SK-N-SH (cell line): ENCODE measurements at regions of chr5 and their contacts with region 1.

Region 1: DNA sequence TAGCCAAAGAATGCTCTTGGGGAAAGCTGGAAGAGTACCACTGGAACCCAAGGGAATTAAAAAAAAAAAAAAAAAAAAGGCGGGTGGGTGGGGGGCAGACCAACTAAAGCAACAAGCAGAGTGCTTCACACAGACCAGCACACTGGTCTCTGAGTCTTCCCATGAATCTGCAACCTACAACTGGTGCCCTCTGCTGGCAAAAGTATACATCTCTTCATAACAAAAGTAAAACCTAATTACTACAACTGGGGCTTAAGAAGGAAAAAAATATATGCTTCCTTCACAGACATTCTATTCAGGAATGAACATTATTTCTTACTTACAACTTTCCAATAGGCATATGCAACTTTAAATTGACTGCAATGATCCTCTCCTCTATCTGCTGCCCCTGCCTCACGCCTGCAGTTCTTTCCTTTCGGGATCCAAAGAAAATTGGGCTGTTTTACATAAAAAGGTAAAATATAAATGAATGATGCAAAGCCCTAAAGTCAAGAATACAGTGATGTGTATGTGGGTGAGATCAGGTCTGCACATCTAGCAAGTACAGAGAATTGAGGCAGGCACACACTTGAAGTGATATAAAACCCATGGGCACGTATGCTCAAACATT is 7.2 kb upstream of the KLHL3 start:
- DNase-seq: peak; percentile 50
- H3K4me3 ChIP-seq: no peak overlapping the region
- H3K27ac ChIP-seq: no peak overlapping the region
- H3K4me1 ChIP-seq: no peaks in the 10 kb centered on the region
- H3K27me3 ChIP-seq: no peaks in the 10 kb centered on the region
- CTCF ChIP-seq: peak; percentile 74
- EP300 ChIP-seq: no peak
- RAD21 ChIP-seq: peak; percentile 80

Region 2: DNA sequence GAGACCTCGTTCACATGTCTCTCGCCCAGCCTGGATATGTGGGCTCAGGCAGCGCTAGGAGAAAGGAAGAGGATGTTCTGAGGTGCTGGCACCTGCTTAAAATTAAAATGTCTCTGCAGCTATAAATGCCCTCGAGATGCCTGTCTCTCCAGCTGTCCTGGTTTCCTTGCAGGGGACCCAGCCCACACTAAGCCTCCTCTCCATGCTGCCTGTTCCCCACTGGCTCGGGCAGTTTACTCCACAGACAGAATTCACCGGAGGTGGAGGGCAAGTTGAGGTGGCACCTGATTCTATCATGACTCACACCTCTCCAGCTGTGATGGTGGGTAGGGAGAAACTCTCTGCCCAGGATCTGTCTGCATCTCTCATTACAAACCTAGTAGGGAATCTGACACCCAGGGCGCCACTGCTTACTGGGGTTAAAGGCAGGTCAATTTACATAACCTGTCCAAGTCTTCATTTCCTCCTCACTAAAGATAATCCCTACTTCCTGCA is 664.9 kb before region 1 on chr5:
- CTCF ChIA-PET with region 1: no interaction called
- POLR2A ChIA-PET with region 1: no interaction called
- DNase-seq: no peak
- H3K4me3 ChIP-seq: no peak overlapping the region
- H3K27ac ChIP-seq: no peak overlapping the region
- H3K4me1 ChIP-seq: peaks cover 4% of the 10 kb centered on the region in 2 experiments; a peak in 2 of 4 replicates
- H3K27me3 ChIP-seq: no peaks in the 10 kb centered on the region
- CTCF ChIP-seq: no peak
- EP300 ChIP-seq: no peak
- RAD21 ChIP-seq: no peak

Region 3: DNA sequence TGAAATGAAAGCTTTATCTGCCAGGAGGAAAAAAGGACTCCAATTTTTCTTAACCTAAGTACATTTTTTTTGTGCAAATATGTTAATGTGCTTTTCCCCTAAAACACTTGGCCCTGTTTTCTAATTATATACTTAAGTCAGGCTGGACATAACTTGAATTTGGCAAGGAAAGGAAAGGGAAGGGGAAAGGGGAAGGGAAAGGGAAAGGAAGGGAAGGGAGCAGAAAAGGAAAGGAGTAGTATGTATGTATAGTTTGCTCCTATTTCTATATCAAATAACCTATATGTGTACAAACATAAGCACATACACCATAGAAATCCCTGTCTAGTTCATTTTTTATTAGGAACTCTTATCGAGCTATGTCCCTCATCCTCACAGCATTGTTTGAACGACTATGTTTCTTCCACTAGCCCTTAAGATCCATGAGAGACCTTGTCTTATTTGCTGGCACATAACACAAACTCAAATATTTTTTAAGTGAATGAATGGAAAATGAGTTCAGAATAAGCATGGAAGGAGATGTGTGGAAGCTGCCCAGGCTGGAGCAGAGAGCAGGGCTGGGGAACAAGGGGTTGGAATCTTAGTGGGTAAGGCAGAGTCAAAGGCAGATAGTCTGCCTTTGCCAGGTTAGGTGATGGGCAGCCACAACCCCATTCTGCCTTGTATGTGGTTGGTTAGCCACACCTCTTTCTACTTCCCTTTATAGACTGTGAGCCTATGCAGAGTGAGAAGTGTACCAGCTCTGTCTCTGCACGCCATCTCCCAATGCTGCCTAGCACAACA is 77.3 kb before region 1 on chr5:
- CTCF ChIA-PET with region 1: interaction called, 239 read pairs
- POLR2A ChIA-PET with region 1: no interaction called
- DNase-seq: no peak
- H3K4me3 ChIP-seq: no peak overlapping the region
- H3K27ac ChIP-seq: no peak overlapping the region
- H3K4me1 ChIP-seq: no peaks in the 10 kb centered on the region; a peak in 1 of 4 replicates
- H3K27me3 ChIP-seq: no peaks in the 10 kb centered on the region
- CTCF ChIP-seq: no peak
- EP300 ChIP-seq: no peak
- RAD21 ChIP-seq: no peak

Region 4: GRCh38 chr5:137730336-137730735 is 12.8 kb before region 1 on chr5:
- CTCF ChIA-PET with region 1: interaction called, 19 read pairs
- POLR2A ChIA-PET with region 1: no interaction called
- DNase-seq: no peak
- H3K4me3 ChIP-seq: no peak overlapping the region
- H3K27ac ChIP-seq: no peak overlapping the region
- H3K4me1 ChIP-seq: peaks cover 0 to 7% of the 10 kb centered on the region in 2 experiments; a peak in 1 of 4 replicates
- H3K27me3 ChIP-seq: no peaks in the 10 kb centered on the region
- CTCF ChIP-seq: no peak
- EP300 ChIP-seq: no peak
- RAD21 ChIP-seq: no peak

Region 5: GRCh38 chr5:137754126-137754960 is 11.2 kb after region 1 on chr5 and contains the start of gene HNRNPA0:
- CTCF ChIA-PET with region 1: interaction called, 16 read pairs
- POLR2A ChIA-PET with region 1: interaction called, 7 read pairs
- DNase-seq: peak; percentile 97
- H3K4me3 ChIP-seq: peak within 1 kb of the TSS; percentile 93 to 94
- H3K27ac ChIP-seq: peak within 1 kb of the TSS; percentile 97
- H3K4me1 ChIP-seq: peaks cover 0 to 6% of the 10 kb centered on the region in 2 experiments; a peak in 2 of 4 replicates
- H3K27me3 ChIP-seq: no peaks in the 10 kb centered on the region
- CTCF ChIP-seq: no peak
- EP300 ChIP-seq: peak; percentile 97 to 99
- RAD21 ChIP-seq: no peak
- polyA plus RNA-seq, gene HNRNPA0: 19.2 and 24.9 TPM in 2 replicates

Region 6: GRCh38 chr5:137822158-137822764 is 79.1 kb after region 1 on chr5:
- CTCF ChIA-PET with region 1: no interaction called
- POLR2A ChIA-PET with region 1: no interaction called
- DNase-seq: peak; percentile 60
- H3K4me3 ChIP-seq: no peak overlapping the region
- H3K27ac ChIP-seq: no peak overlapping the region
- H3K4me1 ChIP-seq: no peaks in the 10 kb centered on the region
- H3K27me3 ChIP-seq: no peaks in the 10 kb centered on the region
- CTCF ChIP-seq: peak; percentile 57
- EP300 ChIP-seq: no peak
- RAD21 ChIP-seq: peak; percentile 81